ENCODE measurements at regions of chr19 and their contacts with region 1.

Region 1: DNA sequence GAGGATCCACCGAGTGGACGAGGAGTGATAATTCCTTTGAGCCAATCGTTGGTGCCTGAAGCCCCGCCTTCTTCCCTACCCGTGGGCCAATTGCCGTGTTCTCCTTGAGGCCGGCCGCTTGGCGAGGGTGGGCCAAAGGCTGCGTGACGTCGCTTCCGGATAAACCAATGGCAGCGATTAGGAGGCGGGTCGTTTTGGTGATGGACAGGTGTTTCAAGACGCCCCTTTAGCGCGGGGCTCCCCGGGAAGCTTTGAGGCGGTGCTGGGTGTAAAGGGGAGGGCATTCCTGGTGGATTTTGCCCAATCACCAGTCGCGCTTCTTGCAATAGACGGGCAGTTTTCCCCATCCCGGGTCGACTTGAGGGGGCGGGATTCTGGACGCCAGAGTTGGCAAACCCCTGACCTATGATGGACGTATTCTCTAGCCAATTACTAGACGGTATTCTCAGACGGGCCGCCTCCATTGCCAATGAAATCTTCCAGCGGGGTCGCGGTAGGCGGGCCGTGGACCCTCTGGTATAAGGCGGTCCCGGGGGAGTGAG is 310 bp upstream of the PRMT1 start:
- DNase-seq: peak; percentile 90 to 100 (median 95)
- ATAC-seq: peak; percentile 80
- H3K4me3 ChIP-seq: peak overlapping the region; percentile 85
- H3K27ac ChIP-seq: peak overlapping the region; percentile 97
- H3K4me1 ChIP-seq: peaks cover 33 to 49% of the 10 kb centered on the region in 2 experiments
- H3K27me3 ChIP-seq: no peaks in the 10 kb centered on the region
- CTCF ChIP-seq: no peak
- EP300 ChIP-seq: no peak
- POLR2A ChIP-seq: no peak
- RAD21 ChIP-seq: no peak

Region 2: DNA sequence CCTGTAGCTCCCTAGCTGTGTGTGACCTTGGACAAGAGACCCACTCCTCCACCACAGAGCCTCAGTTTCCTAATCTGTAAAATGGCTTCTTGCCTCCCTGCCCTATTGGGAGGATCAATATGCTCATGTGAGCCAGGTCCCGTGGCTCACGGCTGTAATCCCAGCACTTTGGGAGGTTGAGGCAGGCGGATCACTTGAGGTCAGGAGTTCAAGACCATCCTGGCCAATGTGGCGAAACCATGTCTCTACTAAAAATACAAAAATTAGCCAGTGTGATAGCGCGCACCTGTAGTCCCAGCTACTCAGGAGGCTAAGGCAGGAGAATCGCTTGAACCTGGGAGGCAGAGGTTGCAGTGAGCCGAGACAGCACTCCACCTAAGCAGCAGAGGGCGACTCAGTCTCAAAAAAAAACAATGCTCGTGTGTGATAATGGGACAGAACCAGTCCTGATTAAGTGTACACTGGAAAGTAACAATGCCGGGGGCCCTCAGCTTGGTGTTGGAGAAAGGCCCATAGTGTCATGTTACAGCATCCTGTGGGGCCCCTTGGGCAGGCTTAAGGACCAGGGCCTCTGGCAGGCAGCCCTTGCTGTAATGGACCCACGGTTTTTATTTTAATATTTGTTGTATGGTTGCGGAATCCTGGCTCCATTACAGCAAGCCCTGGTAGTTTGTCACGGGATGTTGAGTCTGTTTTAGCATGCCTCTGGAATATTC is 173.7 kb before region 1 on chr19:
- CTCF ChIA-PET with region 1: interaction called, 4 read pairs
- POLR2A ChIA-PET with region 1: interaction called, 5 read pairs
- in situ Hi-C with region 1: loop called (anchors 5 kb)
- intact Hi-C with region 1: loop called (anchors 1 kb)
- DNase-seq: peak in 3 of 4 experiments; percentile 24 to 81 (median 56)
- ATAC-seq: peak; percentile 73
- H3K4me3 ChIP-seq: no peak overlapping the region
- H3K27ac ChIP-seq: no peak overlapping the region
- H3K4me1 ChIP-seq: peaks cover 29 to 36% of the 10 kb centered on the region in 2 experiments; a peak in 4 of 5 replicates
- H3K27me3 ChIP-seq: no peaks in the 10 kb centered on the region
- CTCF ChIP-seq: peak; percentile 70 to 73 (median 71)
- EP300 ChIP-seq: no peak
- POLR2A ChIP-seq: no peak
- RAD21 ChIP-seq: peak; percentile 77 to 83

Region 3: DNA sequence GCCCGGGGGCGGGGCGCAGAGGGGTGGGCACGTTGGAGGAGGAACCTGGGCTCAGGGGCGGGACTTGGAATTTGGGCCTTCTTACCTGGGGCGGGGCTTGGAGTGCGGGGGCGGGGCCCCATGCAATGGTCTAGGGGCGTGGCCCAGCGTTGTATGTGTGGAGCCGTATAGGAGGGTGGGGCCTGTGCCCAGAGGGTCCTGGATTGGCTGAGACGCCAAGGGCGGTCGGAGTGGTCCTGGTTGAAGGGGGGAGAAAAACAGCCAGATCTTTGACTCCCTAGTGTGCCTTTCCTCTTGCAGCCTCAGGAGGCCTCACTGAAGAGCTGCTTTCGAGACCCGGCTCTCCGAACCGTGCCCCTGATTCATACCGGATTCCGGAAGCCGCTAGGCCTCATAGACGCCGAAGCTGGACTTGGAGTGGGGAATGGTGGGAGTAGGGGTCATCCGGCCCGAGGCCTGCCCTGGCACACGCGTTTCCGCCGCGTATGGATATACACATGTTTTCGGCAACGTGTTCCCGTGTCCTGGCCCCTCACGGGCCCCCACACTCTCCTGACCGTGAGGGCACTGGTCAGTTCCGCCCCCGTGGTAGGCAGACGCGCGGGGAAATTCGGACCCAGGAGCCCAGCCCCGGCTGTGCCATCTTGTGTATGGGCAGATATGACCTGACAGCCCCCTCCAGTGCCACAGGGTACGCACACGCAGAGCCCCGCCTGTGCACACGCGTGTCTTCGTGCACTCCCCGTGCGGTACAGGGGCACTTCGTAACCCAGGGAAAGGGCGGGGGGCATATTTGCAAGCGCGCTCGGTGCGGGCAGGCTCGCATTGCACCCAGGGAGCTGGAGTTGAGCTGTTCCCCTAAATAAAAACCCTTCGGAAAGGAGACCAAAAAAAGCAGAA is 86.4 kb before region 1 on chr19:
- CTCF ChIA-PET with region 1: no interaction called
- POLR2A ChIA-PET with region 1: interaction called, 4 read pairs
- in situ Hi-C with region 1: no loop called
- intact Hi-C with region 1: loop called (anchors 2 kb)
- DNase-seq: peak; percentile 97 to 99 (median 98)
- ATAC-seq: peak; percentile 89
- H3K4me3 ChIP-seq: peak overlapping the region; percentile 88
- H3K27ac ChIP-seq: peak overlapping the region; percentile 95
- H3K4me1 ChIP-seq: peaks cover 10 to 42% of the 10 kb centered on the region in 2 experiments; a peak in 4 of 5 replicates
- H3K27me3 ChIP-seq: no peaks in the 10 kb centered on the region
- CTCF ChIP-seq: 0 out of 6 replicates have a peak, but pooled peaks of 1 of the 3 experiments have one; percentile 18
- EP300 ChIP-seq: no peak; the same call in 1 of the 2 replicates
- POLR2A ChIP-seq: peak; percentile 97
- RAD21 ChIP-seq: 0 out of 4 replicates have a peak, but pooled peaks of 1 of the 2 experiments have one; percentile 6

Region 4: GRCh38 chr19:49601482-49602038 is 75.2 kb before region 1 on chr19:
- CTCF ChIA-PET with region 1: no interaction called
- POLR2A ChIA-PET with region 1: no interaction called
- in situ Hi-C with region 1: no loop called
- intact Hi-C with region 1: no loop called
- DNase-seq: peak in 1 of 4 experiments; percentile 8
- ATAC-seq: no peak
- H3K4me3 ChIP-seq: no peak overlapping the region
- H3K27ac ChIP-seq: no peak overlapping the region
- H3K4me1 ChIP-seq: peaks cover 0 to 16% of the 10 kb centered on the region in 2 experiments; a peak in 2 of 5 replicates
- H3K27me3 ChIP-seq: no peaks in the 10 kb centered on the region
- CTCF ChIP-seq: no peak
- EP300 ChIP-seq: no peak
- POLR2A ChIP-seq: no peak
- RAD21 ChIP-seq: no peak

Region 5: GRCh38 chr19:49665351-49666119 is 11.2 kb before region 1 on chr19 and contains the starts of genes BCL2L12 and IRF3:
- CTCF ChIA-PET with region 1: no interaction called
- POLR2A ChIA-PET with region 1: interaction called, 35 read pairs
- in situ Hi-C with region 1: no loop called
- intact Hi-C with region 1: no loop called
- DNase-seq: peak; percentile 85 to 99 (median 91)
- ATAC-seq: peak; percentile 92
- H3K4me3 ChIP-seq: peak within 1 kb of the TSS; percentile 81
- H3K27ac ChIP-seq: peak within 1 kb of the TSS; percentile 91
- H3K4me1 ChIP-seq: peaks cover 7 to 33% of the 10 kb centered on the region in 2 experiments; a peak in 4 of 5 replicates
- H3K27me3 ChIP-seq: no peaks in the 10 kb centered on the region
- CTCF ChIP-seq: 0 out of 6 replicates have a peak, but pooled peaks of 1 of the 3 experiments have one; percentile 15
- EP300 ChIP-seq: no peak
- POLR2A ChIP-seq: peak; percentile 89
- RAD21 ChIP-seq: no peak
- polyA plus RNA-seq, gene BCL2L12: 7.4 to 7.5 TPM
- polyA plus RNA-seq, gene IRF3: 7.5 to 11.6 TPM

Region 6: DNA sequence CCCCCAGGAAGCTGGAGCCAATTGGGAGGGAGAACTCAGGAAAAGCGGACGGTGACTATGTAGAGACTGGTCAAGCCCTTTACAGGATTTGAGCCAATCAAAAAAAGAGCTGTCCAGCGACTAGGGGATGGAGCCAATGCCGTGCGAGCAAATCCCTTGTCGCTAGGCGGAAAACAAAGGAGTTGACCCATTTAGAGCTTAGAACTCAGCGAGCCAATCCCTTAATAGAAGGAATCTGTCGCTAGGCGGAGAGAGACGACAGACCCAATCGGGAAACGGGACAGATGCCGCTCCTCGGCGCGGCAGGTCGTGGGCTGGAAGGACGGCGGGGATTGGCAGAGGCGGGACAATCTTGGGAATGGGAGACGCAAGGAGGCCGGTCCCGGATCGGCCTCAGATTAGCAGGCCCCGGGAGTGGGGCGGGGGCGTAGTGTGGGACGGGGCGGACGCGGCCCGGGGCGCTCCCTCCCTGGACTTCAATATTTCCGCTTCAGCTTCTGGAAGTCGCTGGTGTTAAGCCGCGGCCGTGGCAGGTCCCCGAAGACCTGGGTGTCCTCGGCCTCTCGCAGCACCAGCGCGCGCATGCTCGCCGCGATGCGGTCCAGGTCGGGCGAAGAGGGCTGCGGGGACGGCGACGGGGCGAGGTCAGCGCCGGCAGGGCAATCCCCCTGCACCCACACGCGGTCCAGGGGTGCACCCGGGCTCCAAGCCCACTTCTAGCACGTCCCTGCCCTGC is 192.8 kb after region 1 on chr19:
- CTCF ChIA-PET with region 1: no interaction called
- POLR2A ChIA-PET with region 1: interaction called, 3 read pairs
- in situ Hi-C with region 1: no loop called
- intact Hi-C with region 1: loop called (anchors 5 kb)
- DNase-seq: peak; percentile 82 to 99 (median 89)
- ATAC-seq: peak; percentile 87
- H3K4me3 ChIP-seq: peak overlapping the region; percentile 47
- H3K27ac ChIP-seq: peak overlapping the region; percentile 70
- H3K4me1 ChIP-seq: peaks cover 40 to 84% of the 10 kb centered on the region in 2 experiments
- H3K27me3 ChIP-seq: no peaks in the 10 kb centered on the region
- CTCF ChIP-seq: 0 out of 6 replicates have a peak, but pooled peaks of 1 of the 3 experiments have one; percentile 1
- EP300 ChIP-seq: no peak
- POLR2A ChIP-seq: peak; percentile 60
- RAD21 ChIP-seq: no peak